PC-3 (cell line): ENCODE measurements at regions of chr10 and their contacts with region 1.

Region 1: GRCh38 chr10:107546287-107546686 is 381.8 kb upstream of the SORCS1 start:
- DNase-seq: peak; percentile 89
- ATAC-seq: peak; percentile 89
- H3K4me3 ChIP-seq: peak overlapping the region; percentile 57
- H3K27ac ChIP-seq: peak overlapping the region; percentile 99
- H3K4me1 ChIP-seq: peaks cover 22% of the 10 kb centered on the region
- H3K27me3 ChIP-seq: no peaks in the 10 kb centered on the region
- CTCF ChIP-seq: no peak

Region 2: DNA sequence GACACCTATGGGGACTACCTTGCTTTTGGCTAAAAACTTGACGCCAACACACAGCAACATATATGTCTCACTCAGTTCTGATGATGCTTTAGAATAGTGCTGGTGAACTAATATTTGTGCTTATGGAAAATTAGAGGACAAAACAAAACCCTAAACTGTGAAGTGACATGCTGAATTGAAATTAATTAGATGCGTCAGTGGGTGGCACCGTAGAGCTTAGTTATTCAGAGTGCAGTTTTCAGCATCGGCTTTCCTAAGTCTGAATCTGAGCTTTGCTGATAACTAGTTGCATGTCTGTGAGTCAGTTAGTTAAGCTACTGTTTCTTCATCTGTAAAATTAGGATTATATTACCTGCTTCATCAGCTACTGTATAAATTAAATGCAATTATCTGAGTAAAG is 136.8 kb before region 1 on chr10:
- CTCF ChIA-PET with region 1: interaction called, 4 read pairs
- POLR2A ChIA-PET with region 1: no interaction called
- intact Hi-C with region 1: loop called (anchors 5 kb)
- DNase-seq: peak; percentile 49
- ATAC-seq: peak; percentile 67
- H3K4me3 ChIP-seq: no peak overlapping the region
- H3K27ac ChIP-seq: no peak overlapping the region
- H3K4me1 ChIP-seq: no peaks in the 10 kb centered on the region
- H3K27me3 ChIP-seq: no peaks in the 10 kb centered on the region
- CTCF ChIP-seq: peak; percentile 61

Region 3: GRCh38 chr10:107451047-107451446 is 95.2 kb before region 1 on chr10:
- CTCF ChIA-PET with region 1: no interaction called
- POLR2A ChIA-PET with region 1: no interaction called
- intact Hi-C with region 1: no loop called
- DNase-seq: no peak
- ATAC-seq: no peak
- H3K4me3 ChIP-seq: no peak overlapping the region
- H3K27ac ChIP-seq: no peak overlapping the region
- H3K4me1 ChIP-seq: no peaks in the 10 kb centered on the region
- H3K27me3 ChIP-seq: no peaks in the 10 kb centered on the region
- CTCF ChIP-seq: no peak

Region 4: DNA sequence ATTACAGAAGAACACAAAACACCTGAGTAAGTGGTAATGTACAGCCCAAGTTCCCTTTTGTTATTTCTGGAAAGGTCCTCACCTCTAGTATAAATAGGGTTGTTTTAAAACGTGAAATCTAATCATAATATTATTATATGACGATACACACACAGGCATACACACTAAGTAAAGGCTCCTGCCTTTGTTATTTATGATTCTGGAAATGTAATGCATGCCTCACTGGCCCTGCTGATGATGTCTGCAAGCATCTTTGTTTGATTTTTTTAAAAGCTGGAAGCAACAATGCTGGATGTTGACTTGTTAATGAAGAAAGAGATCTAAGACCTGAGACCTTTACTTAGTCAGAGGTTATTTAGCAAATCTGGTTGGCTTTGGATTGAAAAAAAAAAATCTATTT is 74.4 kb before region 1 on chr10:
- CTCF ChIA-PET with region 1: no interaction called
- POLR2A ChIA-PET with region 1: no interaction called
- intact Hi-C with region 1: no loop called
- DNase-seq: no peak
- ATAC-seq: no peak
- H3K4me3 ChIP-seq: no peak overlapping the region
- H3K27ac ChIP-seq: no peak overlapping the region
- H3K4me1 ChIP-seq: no peaks in the 10 kb centered on the region
- H3K27me3 ChIP-seq: no peaks in the 10 kb centered on the region
- CTCF ChIP-seq: no peak

Region 5: DNA sequence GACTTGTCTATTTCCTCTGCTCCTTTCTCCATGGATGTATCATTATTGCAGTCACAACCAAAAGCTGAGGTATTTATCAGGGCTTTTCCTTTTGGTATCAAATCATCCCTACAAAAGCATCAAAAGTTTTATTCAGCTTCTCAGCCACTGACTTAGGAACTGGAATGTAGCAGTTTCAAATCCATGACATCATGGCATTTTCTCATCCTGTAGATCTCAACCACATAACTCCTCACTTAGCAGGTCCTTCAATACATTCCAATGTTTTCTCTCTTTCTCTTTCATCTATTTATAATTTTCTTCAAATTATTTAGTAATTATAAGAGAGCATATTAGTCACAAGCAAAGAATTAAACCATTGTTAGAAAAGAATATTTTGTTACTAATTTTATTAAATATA is 155.7 kb after region 1 on chr10:
- CTCF ChIA-PET with region 1: no interaction called
- POLR2A ChIA-PET with region 1: no interaction called
- intact Hi-C with region 1: loop called (anchors 10 kb)
- DNase-seq: peak; percentile 8
- ATAC-seq: peak; percentile 72
- H3K4me3 ChIP-seq: no peak overlapping the region
- H3K27ac ChIP-seq: peak overlapping the region; percentile 41; the same call in 1 of the 2 replicates
- H3K4me1 ChIP-seq: no peaks in the 10 kb centered on the region
- H3K27me3 ChIP-seq: no peaks in the 10 kb centered on the region
- CTCF ChIP-seq: no peak

Region 6: DNA sequence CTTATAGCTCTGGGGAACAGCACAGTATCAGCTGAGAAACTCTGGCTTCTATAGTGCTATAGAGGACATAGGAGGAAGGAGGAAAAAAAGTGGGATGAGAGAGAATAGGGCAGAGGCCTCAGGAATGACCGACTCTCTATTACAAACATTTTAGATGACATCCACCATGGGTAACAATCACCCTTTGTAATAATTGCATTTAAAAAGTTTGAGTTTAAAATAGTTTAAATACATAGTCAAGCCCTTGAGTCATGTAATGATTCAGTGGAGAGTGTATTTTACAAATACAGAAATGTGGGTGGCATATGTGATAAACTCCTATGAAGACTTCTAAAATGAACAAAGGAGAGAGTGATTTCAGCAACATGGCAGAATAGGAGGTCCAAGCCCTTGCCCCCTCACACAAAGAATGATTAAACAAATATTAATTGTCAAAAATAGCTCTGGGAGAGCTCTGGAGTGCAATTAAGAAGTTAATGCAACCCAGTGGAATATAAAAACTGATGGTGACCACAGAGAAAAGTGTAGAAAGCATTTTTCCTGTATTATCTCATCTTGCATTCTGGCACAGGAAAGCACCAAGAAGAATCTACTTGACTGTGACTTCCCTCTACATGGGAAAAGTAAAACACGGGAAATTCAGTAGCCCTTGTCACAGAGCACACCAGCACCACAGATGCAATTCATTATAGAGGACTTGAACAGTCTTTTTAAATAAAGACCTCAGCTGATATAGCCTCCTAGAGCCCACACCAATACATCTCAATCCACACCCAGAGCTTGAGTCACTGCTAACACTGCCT is 187.2 kb after region 1 on chr10:
- CTCF ChIA-PET with region 1: no interaction called
- POLR2A ChIA-PET with region 1: no interaction called
- intact Hi-C with region 1: loop called (anchors 2 kb)
- DNase-seq: peak; percentile 78
- ATAC-seq: peak; percentile 94
- H3K4me3 ChIP-seq: no peak overlapping the region
- H3K27ac ChIP-seq: peak overlapping the region; percentile 89
- H3K4me1 ChIP-seq: peaks cover 29% of the 10 kb centered on the region
- H3K27me3 ChIP-seq: no peaks in the 10 kb centered on the region
- CTCF ChIP-seq: no peak

Region 7: DNA sequence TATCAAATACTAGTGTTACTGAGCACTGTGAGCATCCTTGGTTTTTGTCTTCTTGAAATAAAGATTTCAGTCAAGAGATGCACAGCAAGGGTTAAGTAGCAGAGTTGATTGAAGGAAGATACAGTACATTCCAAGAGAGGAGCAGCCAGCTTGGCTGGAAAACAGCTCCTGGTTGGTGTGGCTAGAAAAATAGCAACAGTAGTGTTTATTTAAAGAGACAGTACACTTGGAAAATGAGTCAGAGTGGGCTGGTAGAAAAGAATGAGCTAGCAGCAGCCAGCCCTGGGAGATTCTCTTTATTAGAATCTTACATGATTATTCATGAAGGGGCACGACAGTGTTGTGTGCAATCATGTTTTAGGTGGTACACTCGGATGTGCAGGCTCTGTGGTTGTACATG is 634.6 kb after region 1 on chr10:
- CTCF ChIA-PET with region 1: no interaction called
- POLR2A ChIA-PET with region 1: no interaction called
- intact Hi-C with region 1: no loop called
- DNase-seq: peak; percentile 49
- ATAC-seq: peak; percentile 60
- H3K4me3 ChIP-seq: no peak overlapping the region
- H3K27ac ChIP-seq: no peak overlapping the region
- H3K4me1 ChIP-seq: peaks cover 2% of the 10 kb centered on the region; the same call in 1 of the 2 replicates
- H3K27me3 ChIP-seq: no peaks in the 10 kb centered on the region
- CTCF ChIP-seq: no peak